Left ventricle myocardium superior (tissue), 1 donor: ENCODE measurements at regions of chr9 and their contacts with region 1.

Region 1: GRCh38 chr9:131432597-131433306 is 38.9 kb downstream of the PRRC2B start:
- DNase-seq: no peak
- ATAC-seq: peak; percentile 39

Region 2: GRCh38 chr9:131366761-131367401 is 65.9 kb before region 1 on chr9:
- intact Hi-C with region 1: loop called (anchors 10 kb)
- DNase-seq: peak; percentile 57
- ATAC-seq: peak; percentile 85